ENCODE measurements at regions of chr2 and their contacts with region 1.

Region 1: DNA sequence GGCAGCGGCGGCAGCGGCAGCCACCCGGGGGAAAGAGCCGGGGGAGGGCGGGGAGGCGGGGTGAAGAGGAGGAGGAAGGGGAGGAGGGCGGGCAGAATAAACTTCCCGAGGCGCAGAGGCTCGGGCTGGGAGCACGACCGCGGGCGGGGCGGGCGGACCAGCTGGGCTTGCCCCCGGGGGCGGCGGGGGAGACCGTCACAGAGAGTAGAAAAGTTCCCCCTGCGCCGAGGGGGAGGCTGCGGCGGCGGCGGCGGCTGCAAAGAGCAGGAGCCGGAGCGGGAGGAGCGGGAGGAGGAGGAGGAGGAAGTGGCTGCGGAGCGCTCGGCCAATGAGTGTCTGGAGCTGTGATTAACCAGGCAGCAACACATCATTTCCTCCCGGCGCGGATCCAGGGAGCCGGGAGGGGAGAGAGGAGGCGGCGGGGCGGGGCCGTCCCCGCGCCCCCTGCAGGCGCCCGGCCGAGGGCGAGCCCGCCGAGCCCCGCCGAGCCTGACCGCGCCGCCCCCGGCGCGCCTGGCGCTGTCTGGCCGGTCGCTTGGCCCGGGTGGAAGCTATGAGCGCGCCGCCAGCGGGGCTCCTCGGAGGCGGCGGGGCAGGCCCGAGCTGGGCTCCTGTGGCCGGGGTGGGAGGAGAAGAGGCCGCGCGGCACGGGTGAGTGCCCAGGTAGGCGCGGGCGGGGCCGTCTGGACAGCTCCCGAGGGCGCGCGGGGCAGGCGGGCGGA is at the start of gene ACVR1:
- DNase-seq: peak; percentile 89 to 97
- H3K4me3 ChIP-seq: peak within 1 kb of the TSS; percentile 91 to 99
- H3K27ac ChIP-seq: peak within 1 kb of the TSS; percentile 93 to 99
- H3K4me1 ChIP-seq: peaks cover 4 to 15% of the 10 kb centered on the region in 2 donors
- H3K27me3 ChIP-seq: no peaks in the 10 kb centered on the region
- CTCF ChIP-seq: peak; percentile 10 to 71 (median 11)
- total RNA-seq, gene ACVR1: 6.9 TPM

Region 2: DNA sequence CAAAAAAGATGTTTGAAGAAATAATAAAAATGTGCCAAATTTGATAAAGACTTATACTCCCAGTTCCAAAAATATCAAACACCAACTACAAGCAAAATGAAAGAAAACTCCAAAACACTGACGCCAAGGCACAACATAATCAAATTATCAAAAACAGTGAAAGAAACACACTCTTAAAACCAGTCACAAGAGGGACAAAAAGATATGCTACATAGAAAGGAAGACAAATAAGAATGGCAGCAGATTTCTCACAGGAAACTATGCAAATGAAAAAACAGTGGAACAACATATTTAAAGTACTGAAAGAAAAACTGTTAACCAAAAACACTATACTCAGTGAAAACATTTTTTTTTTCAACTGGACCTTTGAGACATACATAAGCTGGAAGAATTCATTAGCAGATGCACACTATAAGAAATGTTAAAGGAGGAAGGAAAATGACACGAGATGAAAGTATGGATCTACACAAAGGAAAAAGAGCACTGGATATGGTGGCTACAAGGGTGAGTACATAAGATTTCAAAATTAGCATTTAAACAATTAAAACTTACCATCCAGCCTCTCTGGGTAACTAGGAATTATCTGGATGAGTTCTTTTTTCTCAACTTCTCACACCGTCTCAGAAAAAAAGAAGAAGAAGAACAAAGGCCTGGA is 153.5 kb before region 1 on chr2:
- intact Hi-C with region 1: no loop called
- DNase-seq: no peak
- H3K4me3 ChIP-seq: no peak overlapping the region
- H3K27ac ChIP-seq: no peak overlapping the region
- H3K4me1 ChIP-seq: no peaks in the 10 kb centered on the region
- H3K27me3 ChIP-seq: no peaks in the 10 kb centered on the region
- CTCF ChIP-seq: no peak

Region 3: DNA sequence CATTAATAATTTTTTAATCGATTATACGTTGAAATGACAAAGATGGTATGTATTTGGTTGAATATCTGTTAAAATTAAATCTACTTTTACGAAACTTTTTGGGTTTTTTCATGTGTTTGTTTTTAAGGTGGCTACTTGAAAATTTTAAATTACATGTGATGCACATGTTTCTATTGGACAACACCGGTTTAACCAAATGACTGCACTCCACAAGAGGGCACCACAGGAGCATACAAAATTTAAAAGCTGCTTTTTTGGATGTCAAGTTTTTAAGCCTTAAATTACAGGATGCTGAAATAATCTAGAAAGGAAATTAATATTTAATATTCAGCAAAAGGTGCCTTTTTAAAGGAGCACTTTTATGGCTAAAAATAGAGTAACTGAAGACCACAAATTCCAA is 98.8 kb before region 1 on chr2:
- intact Hi-C with region 1: loop called (anchors 2 kb)
- DNase-seq: peak in 1 of 2 donors; percentile 70
- H3K4me3 ChIP-seq: no peak overlapping the region
- H3K27ac ChIP-seq: no peak overlapping the region
- H3K4me1 ChIP-seq: peaks cover 0 to under 1% of the 10 kb centered on the region in 2 donors
- H3K27me3 ChIP-seq: no peaks in the 10 kb centered on the region
- CTCF ChIP-seq: peak; percentile 44 to 68 (median 61)

Region 4: GRCh38 chr2:157789933-157790511 is 86.2 kb before region 1 on chr2:
- intact Hi-C with region 1: loop called (anchors 1 kb)
- DNase-seq: peak; percentile 57 to 89
- H3K4me3 ChIP-seq: peak overlapping the region in 1 of 2 donors; percentile 2
- H3K27ac ChIP-seq: peak overlapping the region; percentile 70 to 77
- H3K4me1 ChIP-seq: peaks cover 14 to 66% of the 10 kb centered on the region in 2 donors
- H3K27me3 ChIP-seq: no peaks in the 10 kb centered on the region
- CTCF ChIP-seq: no peak

Region 5: DNA sequence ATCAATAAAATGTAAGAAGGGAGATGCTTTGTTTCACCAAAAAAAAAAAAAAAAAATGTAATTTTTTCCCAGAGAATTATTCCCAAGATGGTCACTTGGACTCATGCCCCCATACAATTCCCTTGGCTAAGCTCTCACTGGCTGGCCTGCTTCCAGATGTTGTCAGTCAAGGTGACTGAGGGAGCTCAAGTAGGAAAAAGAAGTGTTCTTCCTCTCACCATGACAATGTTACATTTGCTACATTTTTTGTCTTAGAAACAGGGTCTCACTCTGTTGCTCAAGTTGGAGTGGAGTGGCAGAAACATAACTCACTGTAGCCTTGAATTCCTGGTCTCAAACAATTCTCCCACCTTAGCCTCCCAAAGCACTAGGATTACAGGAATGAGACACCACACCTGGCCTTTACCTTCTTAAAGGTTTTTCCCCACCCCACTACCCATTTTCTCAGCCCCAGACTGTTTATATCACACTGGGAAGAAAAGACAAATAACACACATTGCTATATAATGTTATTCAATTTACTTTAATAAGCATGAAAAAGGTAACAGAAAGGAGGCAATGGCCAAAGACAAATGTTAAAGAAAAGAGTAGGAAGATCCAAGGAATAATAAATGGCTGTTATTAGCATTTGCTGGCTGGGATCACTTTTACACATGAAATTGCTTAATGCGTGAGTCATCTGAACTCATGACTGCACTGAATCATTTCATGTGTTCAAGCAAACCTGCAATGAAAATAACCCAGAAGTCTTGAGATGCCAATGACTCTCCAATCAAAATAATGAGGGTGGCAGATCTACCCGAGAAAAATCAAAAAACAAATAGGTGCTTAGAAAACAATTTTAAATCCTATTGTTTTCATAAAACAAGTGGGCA is 45.3 kb before region 1 on chr2:
- intact Hi-C with region 1: loop called (anchors 2 kb)
- DNase-seq: peak in 1 of 2 donors; percentile 75
- H3K4me3 ChIP-seq: no peak overlapping the region
- H3K27ac ChIP-seq: peak overlapping the region; percentile 61 to 87
- H3K4me1 ChIP-seq: peaks cover 3 to 27% of the 10 kb centered on the region in 2 donors
- H3K27me3 ChIP-seq: no peaks in the 10 kb centered on the region
- CTCF ChIP-seq: no peak

Measured in ascending aorta (tissue), 2 donors.